Posterior vena cava (tissue), 2 donors: ENCODE measurements at regions of chrX and their contacts with region 1.

Region 1: DNA sequence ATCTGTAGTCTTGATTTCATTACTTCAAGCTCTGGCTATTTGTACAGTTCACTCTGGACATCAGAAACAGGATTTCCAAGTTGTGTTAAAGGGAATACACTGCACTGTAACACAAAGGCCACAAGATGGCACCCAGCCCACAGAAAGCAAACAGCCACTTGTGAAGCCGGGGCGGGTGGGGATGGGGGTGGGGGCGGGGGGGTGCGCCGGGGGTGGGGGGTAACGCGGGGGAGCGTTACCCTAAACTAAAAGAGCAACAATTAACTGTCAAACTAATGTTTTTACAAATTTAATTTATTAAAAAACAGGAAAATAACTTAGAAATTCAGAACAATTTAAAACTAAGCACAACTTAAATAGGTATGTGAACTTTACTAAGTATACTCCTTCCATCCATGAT is 27.3 kb downstream of the PRDX4 start:
- DNase-seq: no peak

Region 2: DNA sequence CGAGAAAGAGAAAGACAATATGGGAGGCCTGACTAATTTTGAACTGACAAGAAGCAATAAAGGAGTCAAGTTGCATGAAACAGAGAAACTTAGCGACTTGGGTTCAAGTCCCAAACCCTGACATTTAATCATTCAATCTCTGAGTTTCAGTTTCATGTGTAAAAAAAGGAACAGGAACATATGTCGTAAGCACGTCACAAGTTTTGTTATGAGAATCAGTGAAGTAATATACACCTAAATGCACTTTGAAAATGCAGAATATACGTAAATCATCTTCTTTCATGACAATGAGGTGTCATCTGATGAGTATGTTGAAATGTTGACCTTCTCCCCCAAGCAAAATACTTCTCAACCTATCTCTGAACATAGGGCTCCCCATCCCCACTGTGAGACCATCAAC is 38.1 kb after region 1 on chrX:
- intact Hi-C with region 1: no loop called
- DNase-seq: no peak

Region 3: GRCh38 chrX:23822841-23823240 is 128.2 kb after region 1 on chrX:
- intact Hi-C with region 1: no loop called
- DNase-seq: no peak

Region 4: DNA sequence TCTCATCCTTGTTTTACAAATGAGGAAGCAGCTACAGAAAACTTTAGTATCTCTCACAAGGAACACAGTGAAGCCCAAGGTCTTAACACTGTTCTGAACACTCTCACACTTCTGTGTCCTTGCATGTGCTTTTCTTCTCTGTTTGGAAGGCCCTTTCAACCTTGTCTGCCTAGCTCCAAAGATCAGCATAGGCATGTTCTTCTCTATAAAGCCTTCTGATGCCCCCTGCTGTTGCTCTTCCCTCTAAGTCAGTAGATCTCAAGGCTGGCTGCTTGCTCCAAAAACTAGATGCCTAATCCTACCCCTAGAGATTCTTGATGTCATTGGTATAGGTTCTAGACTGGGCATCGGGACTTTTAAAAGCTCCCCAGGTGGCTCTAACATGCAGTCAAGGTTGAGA is 207.2 kb after region 1 on chrX:
- intact Hi-C with region 1: loop called (anchors 5 to 10 kb)
- DNase-seq: no peak

Region 5: DNA sequence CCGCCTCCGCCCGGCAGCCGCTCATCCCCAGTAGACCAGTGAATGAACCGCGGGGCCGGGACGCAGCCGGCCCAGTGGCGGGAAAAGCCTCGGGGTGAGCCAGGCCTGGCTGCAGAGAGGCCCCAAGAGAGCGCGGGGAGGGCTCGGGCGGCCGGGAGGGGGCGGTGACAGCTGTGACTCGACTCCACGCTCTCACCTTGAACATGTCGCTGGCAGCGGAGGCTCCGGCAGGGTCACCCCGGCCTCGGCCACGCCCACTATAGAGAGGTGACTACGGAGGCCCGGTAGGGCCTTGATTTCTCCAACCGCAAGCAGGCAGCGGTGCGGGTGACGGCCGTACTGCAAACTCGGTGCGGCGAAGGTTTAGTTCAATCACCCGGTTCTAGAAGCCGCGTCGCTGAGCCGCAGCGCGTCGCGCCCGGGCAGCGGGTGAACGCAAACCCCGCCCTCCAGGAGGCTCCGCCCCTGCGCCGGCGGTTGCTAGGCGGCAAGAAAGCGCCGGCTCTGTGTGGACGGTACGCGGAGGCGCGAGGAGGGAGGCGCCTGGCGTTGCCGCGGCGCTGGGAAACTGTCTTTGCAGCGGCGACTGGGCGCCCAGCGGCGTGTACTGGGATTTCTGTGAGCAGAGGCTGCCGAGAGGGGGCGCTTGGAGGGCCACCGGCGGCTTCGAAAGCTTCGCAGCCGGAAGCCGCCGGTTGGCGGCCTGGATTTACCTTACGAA is 213.1 kb after region 1 on chrX and contains the starts of genes APOO and CXorf58:
- intact Hi-C with region 1: loop called (anchors 5 to 10 kb)
- DNase-seq: peak; percentile 97
- total RNA-seq, gene APOO: 13.7 to 13.9 TPM
- total RNA-seq, gene CXorf58: 0.24 TPM in 1 of 2 donors, not detected in the other

Region 6: DNA sequence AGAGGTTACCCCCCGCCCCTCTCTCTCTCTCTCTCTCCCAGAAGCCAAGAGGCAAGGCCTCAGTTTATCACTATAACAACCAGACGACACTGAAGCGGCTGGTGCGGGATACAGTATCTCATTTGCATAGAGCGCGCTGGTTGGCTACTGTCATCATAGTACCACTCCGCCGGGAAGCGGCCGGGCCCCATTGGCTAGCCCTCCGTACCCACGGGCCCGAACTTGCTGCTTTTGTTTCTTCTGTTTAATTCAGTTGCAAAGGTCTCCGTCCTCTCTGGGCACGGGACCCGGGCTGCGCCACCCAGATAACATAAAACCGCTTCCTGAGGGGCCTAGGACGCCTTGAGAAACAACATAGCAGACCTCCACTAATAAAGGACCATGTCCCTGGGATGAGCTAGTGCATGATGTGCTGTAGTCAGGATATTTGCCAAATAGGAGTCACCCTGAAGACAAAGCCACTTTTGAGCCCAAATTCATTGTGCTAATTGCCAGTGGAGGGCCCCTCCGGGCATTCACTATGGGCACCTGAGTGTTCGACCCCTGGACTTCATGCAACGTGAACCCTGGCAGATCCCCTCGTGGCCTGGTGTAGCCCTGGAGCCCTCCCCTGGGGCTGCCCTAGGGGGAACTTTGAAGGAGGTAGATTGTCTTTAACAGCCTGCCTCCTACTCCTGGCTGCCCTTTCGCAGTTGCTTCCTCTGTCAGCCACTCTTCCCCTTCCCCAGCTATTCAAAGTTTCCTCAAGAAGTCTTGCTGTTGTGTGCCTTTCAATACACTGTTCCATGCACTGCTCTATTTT is 952.9 kb after region 1 on chrX and contains the start of gene PCYT1B:
- intact Hi-C with region 1: no loop called
- DNase-seq: peak; percentile 87
- total RNA-seq, gene PCYT1B: 1.1 to 3.5 TPM